IMR-90 (cell line): ENCODE measurements at regions of chr17 and their contacts with region 1.

Region 1: DNA sequence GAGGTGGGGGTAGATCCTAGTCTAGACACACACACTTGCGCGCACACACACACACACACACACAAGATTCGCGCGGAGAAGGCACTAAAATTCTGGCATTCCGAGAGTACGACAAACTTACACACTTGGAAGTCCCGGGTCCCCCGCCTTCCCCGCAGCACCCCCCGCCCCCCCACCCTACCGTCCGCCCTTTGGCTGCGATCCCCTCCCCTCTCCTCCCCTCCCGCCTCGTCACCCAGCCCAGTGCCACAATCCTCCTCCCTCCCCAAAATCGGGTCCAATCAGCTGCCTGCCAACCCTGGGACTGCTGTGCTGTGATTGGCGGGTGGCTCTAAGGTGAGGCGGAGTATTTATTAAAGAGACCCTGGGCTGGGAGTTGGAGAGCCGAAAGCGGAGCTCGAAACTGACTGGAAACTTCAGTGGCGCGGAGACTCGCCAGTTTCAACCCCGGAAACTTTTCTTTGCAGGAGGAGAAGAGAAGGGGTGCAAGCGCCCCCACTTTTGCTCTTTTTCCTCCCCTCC is at the start of gene SOX9:
- DNase-seq: peak; percentile 96
- ATAC-seq: peak; percentile 77
- H3K4me3 ChIP-seq: peak within 1 kb of the TSS; percentile 95
- H3K27ac ChIP-seq: peak within 1 kb of the TSS; percentile 96
- H3K4me1 ChIP-seq: peaks cover 16% of the 10 kb centered on the region
- H3K27me3 ChIP-seq: peaks cover 11% of the 10 kb centered on the region; the same call in 1 of the 2 replicates
- CTCF ChIP-seq: no peak
- POLR2A ChIP-seq: peak; percentile 98
- RAD21 ChIP-seq: peak; percentile 9; the same call in 1 of the 2 replicates
- total RNA-seq, gene SOX9: 4.1 and 8.3 TPM in 2 replicates

Region 2: GRCh38 chr17:70905796-70906195 is 1214.9 kb before region 1 on chr17:
- CTCF ChIA-PET with region 1: no interaction called
- POLR2A ChIA-PET with region 1: interaction called, 12 read pairs
- dilution Hi-C with region 1: no loop called
- in situ Hi-C with region 1: no loop called
- intact Hi-C with region 1: no loop called
- DNase-seq: peak; percentile 100
- ATAC-seq: peak; percentile 93
- H3K4me3 ChIP-seq: no peak overlapping the region
- H3K27ac ChIP-seq: peak overlapping the region; percentile 61
- H3K4me1 ChIP-seq: peaks cover 3% of the 10 kb centered on the region; the same call in 1 of the 2 replicates
- H3K27me3 ChIP-seq: no peaks in the 10 kb centered on the region
- CTCF ChIP-seq: no peak
- POLR2A ChIP-seq: no peak
- RAD21 ChIP-seq: 0 out of 2 replicates have a peak, but pooled peaks have one; percentile 4

Region 3: GRCh38 chr17:71472809-71473789 is 647.6 kb before region 1 on chr17:
- CTCF ChIA-PET with region 1: interaction called, 3 read pairs
- POLR2A ChIA-PET with region 1: interaction called, 3 read pairs
- dilution Hi-C with region 1: no loop called
- in situ Hi-C with region 1: loop called (anchors 10 kb)
- intact Hi-C with region 1: loop called (anchors 1 kb)
- DNase-seq: peak; percentile 70
- ATAC-seq: peak; percentile 95
- H3K4me3 ChIP-seq: no peak overlapping the region
- H3K27ac ChIP-seq: no peak overlapping the region
- H3K4me1 ChIP-seq: no peaks in the 10 kb centered on the region
- H3K27me3 ChIP-seq: no peaks in the 10 kb centered on the region
- CTCF ChIP-seq: peak; percentile 80
- POLR2A ChIP-seq: no peak
- RAD21 ChIP-seq: peak; percentile 84

Region 4: GRCh38 chr17:71959154-71959553 is 161.5 kb before region 1 on chr17:
- CTCF ChIA-PET with region 1: no interaction called
- POLR2A ChIA-PET with region 1: no interaction called
- dilution Hi-C with region 1: no loop called
- in situ Hi-C with region 1: no loop called
- intact Hi-C with region 1: loop called (anchors 2 kb)
- DNase-seq: peak; percentile 8
- ATAC-seq: no peak
- H3K4me3 ChIP-seq: no peak overlapping the region
- H3K27ac ChIP-seq: no peak overlapping the region
- H3K4me1 ChIP-seq: no peaks in the 10 kb centered on the region
- H3K27me3 ChIP-seq: no peaks in the 10 kb centered on the region
- CTCF ChIP-seq: peak; percentile 44
- POLR2A ChIP-seq: no peak
- RAD21 ChIP-seq: peak; percentile 43

Region 5: DNA sequence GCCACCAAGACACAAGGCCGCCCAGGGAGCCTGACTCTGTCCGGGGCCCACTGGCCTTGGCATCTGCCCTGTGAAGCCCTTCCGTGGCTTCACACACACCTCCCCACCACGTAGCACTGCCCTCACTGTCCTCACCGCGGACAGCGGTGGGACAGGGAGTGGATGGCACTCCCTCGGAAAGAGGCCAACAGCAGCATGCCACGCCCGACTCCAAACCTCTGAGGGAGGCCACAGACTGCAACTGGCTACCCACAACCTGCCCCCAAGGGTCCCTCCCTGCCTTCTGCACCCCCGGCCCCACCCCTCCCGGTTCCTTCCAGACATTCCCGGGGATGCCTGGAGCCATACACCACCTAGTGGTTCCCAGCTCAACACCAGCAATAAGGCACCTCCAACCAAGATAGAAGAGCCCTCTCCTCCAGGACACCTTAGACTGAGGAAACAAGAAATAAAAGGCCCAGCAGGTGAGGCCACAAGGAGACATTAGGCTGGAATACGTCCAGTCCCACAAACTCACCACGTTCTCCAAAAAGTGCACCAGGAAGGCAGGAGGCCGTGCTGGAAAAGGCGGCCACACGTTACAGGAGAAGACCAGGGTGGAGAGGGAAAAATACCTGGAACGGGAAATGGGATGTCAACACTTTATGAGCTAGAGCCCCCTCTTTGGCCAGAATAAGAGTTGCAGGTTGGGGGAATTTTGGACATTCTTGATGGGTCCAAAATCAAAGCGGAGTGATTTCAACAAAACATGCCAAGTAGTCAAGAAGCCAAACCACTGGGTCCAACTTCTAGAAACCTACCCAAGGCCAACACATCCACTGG is 310.1 kb after region 1 on chr17:
- CTCF ChIA-PET with region 1: interaction called, 3 read pairs
- POLR2A ChIA-PET with region 1: no interaction called
- dilution Hi-C with region 1: no loop called
- in situ Hi-C with region 1: no loop called
- intact Hi-C with region 1: loop called (anchors 5 kb)
- DNase-seq: no peak
- ATAC-seq: no peak
- H3K4me3 ChIP-seq: no peak overlapping the region
- H3K27ac ChIP-seq: no peak overlapping the region
- H3K4me1 ChIP-seq: peaks cover 15% of the 10 kb centered on the region
- H3K27me3 ChIP-seq: no peaks in the 10 kb centered on the region
- CTCF ChIP-seq: peak; percentile 28
- POLR2A ChIP-seq: no peak
- RAD21 ChIP-seq: peak; percentile 48